ENCODE measurements at regions of chr7 and their contacts with region 1.

Region 1: DNA sequence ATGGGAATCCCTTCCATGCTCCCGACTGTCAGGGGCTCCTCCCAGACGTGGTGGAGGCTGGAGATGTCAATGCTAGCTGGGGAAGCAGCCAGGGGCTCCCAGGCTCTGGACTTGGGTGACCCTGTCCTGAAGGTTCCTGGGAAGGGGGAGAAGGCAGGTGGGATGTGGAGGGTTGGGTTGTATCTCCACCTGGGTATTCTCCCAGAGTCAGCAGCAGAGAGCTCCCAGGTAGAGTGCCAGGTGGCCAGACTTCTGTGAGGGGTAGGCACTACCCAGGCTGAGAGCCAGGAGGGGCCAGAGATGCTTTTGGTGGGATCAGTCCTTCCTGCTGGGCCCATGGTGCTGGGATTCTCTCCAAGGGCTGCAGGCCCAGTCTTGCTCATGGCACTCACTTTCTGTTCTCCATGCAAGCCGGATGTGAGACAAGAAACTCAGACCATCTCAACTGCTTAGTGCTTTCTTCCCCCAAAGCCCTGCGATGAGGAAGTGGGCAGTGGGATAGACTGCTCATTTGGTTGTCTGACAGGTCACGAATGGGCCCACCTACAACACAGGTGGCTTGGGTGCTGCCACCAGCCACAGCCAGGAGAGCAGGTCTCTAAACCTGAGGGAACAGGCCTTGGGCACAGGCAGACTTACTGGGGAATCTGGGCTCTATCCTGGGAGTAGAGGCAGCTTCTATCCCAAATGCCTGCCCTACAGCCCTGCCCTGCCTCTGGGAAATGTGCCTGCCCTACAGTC is 52.5 kb upstream of the CAMK2B start:
- DNase-seq: no peak
- ATAC-seq: no peak
- H3K4me3 ChIP-seq: no peak overlapping the region
- H3K27ac ChIP-seq: peak overlapping the region; percentile 85
- H3K4me1 ChIP-seq: peaks cover 41% of the 10 kb centered on the region
- H3K27me3 ChIP-seq: no peaks in the 10 kb centered on the region
- CTCF ChIP-seq: no peak

Region 2: DNA sequence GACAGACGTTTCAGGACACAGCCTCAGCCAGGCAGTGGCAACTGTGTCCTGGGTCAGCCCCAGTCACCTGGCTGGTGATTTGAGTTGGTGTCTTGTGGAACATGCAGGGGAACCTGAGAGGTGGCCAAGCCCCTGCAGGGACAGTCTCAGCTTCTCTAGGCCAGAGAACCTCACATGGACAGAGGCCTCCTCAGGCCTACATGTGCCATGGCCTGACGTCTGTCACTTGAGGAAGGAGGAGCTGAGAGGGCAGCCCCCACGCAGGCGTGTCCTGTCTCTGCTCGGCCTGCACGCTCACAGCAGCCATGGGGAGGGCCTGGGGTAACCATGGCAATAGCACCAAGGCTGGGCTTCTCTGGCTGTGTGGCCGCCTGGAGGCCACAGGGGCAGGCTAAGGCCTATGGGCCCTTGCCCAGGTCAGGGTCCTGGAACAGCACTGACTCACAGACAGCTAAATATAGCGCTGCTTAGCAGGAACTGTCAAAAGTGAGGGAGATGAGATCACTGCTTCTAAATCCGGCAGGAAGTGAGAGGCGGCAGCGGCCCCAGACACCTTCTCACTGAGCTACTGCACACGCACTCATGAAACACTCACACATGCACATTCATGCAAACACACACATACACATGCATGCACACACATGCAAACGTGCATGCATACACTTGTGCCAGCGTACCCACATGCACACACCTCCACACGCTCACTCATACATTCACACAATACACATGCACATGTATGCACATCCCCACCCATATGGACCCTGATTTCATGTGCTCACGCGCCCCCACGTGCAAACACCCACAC is 120.0 kb before region 1 on chr7:
- CTCF ChIA-PET with region 1: no interaction called
- POLR2A ChIA-PET with region 1: no interaction called
- intact Hi-C with region 1: loop called (anchors 2 kb)
- DNase-seq: peak; percentile 78
- ATAC-seq: peak; percentile 78
- H3K4me3 ChIP-seq: no peak overlapping the region
- H3K27ac ChIP-seq: peak overlapping the region; percentile 78
- H3K4me1 ChIP-seq: peaks cover 27% of the 10 kb centered on the region
- H3K27me3 ChIP-seq: no peaks in the 10 kb centered on the region
- CTCF ChIP-seq: no peak

Region 3: GRCh38 chr7:44348300-44348699 is 29.6 kb before region 1 on chr7:
- CTCF ChIA-PET with region 1: interaction called, 3 read pairs
- POLR2A ChIA-PET with region 1: no interaction called
- intact Hi-C with region 1: loop called (anchors 2 kb)
- DNase-seq: peak; percentile 50
- ATAC-seq: peak; percentile 55
- H3K4me3 ChIP-seq: no peak overlapping the region
- H3K27ac ChIP-seq: no peak overlapping the region
- H3K4me1 ChIP-seq: peaks cover 12% of the 10 kb centered on the region; the same call in 1 of the 2 replicates
- H3K27me3 ChIP-seq: no peaks in the 10 kb centered on the region
- CTCF ChIP-seq: peak; percentile 57

Region 4: DNA sequence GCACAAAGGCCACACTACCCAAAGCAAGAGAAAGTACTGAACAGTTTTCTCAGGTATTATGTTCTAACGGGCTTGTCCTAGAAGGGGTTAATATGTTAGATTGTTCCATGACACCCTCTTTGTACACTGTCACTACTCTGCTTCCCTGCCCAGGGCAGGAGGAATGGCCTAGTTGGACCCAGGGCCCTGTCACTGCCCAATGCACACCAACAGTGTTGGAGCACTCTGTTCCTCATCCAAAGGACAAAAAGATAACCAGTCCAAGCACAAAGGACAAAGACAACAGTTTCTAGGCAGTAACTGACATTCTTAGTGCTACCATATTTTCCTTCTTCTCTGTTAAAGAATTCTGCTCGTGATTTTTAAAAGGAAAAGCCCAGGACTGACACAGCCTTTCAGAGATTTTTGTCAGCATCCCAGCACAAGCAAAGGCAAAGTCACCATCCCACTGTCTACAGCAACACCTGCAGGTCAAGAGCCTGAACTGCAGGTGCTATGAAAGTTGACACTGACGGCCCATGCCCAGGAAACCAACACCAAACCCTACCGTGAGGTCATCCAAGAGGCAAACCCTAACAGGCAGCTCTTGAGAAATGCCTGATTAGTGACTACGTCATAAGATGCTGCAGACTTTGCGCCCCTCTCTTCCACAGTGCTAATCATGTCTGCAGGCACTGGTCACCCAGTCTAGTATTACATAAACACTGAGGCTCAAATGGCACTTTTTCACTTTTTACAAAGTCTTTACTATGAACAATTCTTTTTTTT is 99.4 kb after region 1 on chr7:
- CTCF ChIA-PET with region 1: no interaction called
- POLR2A ChIA-PET with region 1: no interaction called
- intact Hi-C with region 1: loop called (anchors 10 kb)
- DNase-seq: peak; percentile 83
- ATAC-seq: peak; percentile 77
- H3K4me3 ChIP-seq: no peak overlapping the region
- H3K27ac ChIP-seq: no peak overlapping the region
- H3K4me1 ChIP-seq: peaks cover 26% of the 10 kb centered on the region
- H3K27me3 ChIP-seq: no peaks in the 10 kb centered on the region
- CTCF ChIP-seq: peak; percentile 92

Region 5: DNA sequence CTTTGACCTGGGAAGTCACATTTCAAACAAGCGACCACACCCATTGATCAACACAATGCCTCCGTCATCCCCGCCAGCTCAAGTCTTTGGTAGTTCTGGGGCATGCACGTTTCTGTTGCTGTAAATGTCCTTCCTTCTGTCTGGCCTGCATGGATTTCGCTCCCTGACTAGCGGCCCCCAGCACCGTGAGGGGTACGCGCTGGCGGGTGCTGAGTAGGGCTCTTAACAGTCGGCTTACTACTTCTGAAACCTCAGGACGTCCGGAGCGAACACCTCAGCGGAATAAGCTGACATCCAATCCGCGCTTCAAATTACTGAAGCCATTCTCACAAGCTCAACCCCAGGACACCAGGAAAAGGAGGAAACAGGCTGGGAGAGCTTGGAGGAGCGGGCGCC is 112.1 kb after region 1 on chr7:
- CTCF ChIA-PET with region 1: no interaction called
- POLR2A ChIA-PET with region 1: interaction called, 13 read pairs
- intact Hi-C with region 1: no loop called
- DNase-seq: peak; percentile 46
- ATAC-seq: peak; percentile 59
- H3K4me3 ChIP-seq: peak overlapping the region; percentile 89
- H3K27ac ChIP-seq: peak overlapping the region; percentile 89
- H3K4me1 ChIP-seq: peaks cover 12% of the 10 kb centered on the region
- H3K27me3 ChIP-seq: no peaks in the 10 kb centered on the region
- CTCF ChIP-seq: no peak

Region 6: GRCh38 chr7:44587843-44588711 is 210.2 kb after region 1 on chr7:
- CTCF ChIA-PET with region 1: no interaction called
- POLR2A ChIA-PET with region 1: no interaction called
- intact Hi-C with region 1: no loop called
- DNase-seq: peak; percentile 77
- ATAC-seq: peak; percentile 88
- H3K4me3 ChIP-seq: no peak overlapping the region
- H3K27ac ChIP-seq: peak overlapping the region; percentile 65
- H3K4me1 ChIP-seq: peaks cover 9% of the 10 kb centered on the region; the same call in 1 of the 2 replicates
- H3K27me3 ChIP-seq: no peaks in the 10 kb centered on the region
- CTCF ChIP-seq: peak; percentile 87